ENCODE measurements at regions of chr3 and their contacts with region 1.

Region 1: GRCh38 chr3:71491154-71491752 is 92.3 kb downstream of the FOXP1 start:
- DNase-seq: no peak
- H3K4me3 Mint-ChIP-seq: no peak overlapping the region
- H3K27ac Mint-ChIP-seq: peak overlapping the region; percentile 76
- H3K4me1 Mint-ChIP-seq: peaks cover 84% of the 10 kb centered on the region
- H3K27me3 Mint-ChIP-seq: no peaks in the 10 kb centered on the region

Region 2: GRCh38 chr3:71285086-71285485 is 206.2 kb before region 1 on chr3:
- CTCF ChIA-PET with region 1: no interaction called
- POLR2A ChIA-PET with region 1: no interaction called
- DNase-seq: no peak
- H3K4me3 Mint-ChIP-seq: no peak overlapping the region
- H3K27ac Mint-ChIP-seq: no peak overlapping the region
- H3K4me1 Mint-ChIP-seq: peaks cover 4% of the 10 kb centered on the region
- H3K27me3 Mint-ChIP-seq: no peaks in the 10 kb centered on the region

Region 3: GRCh38 chr3:71389911-71390573 is 101.2 kb before region 1 on chr3:
- CTCF ChIA-PET with region 1: no interaction called
- POLR2A ChIA-PET with region 1: no interaction called
- DNase-seq: peak; percentile 36
- H3K4me3 Mint-ChIP-seq: peak overlapping the region; percentile 58
- H3K27ac Mint-ChIP-seq: peak overlapping the region; percentile 82
- H3K4me1 Mint-ChIP-seq: peaks cover 40% of the 10 kb centered on the region
- H3K27me3 Mint-ChIP-seq: peaks cover 11% of the 10 kb centered on the region

Region 4: DNA sequence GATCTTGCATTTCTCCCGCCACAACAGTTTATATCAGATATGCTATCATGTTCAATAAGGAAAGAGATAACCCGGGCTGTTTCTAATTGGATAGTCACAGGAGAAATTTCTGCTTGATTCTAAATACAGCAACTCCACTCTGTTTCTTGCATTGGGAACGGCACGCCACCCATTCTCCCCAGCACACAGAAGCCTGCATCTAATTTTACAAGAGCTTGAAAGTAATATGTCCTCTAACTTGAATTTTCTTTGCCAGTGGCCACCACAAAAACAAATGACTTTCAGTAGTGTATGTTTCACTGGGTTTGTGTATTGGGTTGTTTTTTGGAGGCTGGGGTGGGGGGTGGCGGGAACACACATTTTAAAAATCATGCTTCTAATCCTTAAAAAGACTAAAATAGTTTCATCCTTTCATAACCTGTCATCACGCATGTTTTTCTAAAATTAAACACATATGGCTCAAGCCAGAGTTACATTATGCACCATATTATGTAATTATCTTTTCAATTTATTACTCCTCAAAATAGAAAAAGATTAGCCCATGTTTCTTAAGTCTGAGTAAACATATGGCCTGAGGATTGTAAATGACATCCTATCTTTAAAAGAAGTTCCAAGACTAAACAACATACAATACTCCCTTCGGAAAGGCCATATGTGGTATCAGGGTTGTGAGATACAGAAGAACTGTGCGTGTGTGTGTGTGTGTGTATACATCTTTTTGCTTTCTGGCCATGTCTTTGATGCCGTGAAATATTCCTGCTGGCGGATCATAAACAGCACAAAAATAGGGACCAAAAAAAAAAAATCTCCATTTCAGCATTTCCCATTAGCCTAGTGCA is 84.1 kb before region 1 on chr3:
- CTCF ChIA-PET with region 1: no interaction called
- POLR2A ChIA-PET with region 1: no interaction called
- DNase-seq: no peak
- H3K4me3 Mint-ChIP-seq: no peak overlapping the region
- H3K27ac Mint-ChIP-seq: no peak overlapping the region
- H3K4me1 Mint-ChIP-seq: peaks cover 7% of the 10 kb centered on the region
- H3K27me3 Mint-ChIP-seq: peaks cover 3% of the 10 kb centered on the region

Region 5: DNA sequence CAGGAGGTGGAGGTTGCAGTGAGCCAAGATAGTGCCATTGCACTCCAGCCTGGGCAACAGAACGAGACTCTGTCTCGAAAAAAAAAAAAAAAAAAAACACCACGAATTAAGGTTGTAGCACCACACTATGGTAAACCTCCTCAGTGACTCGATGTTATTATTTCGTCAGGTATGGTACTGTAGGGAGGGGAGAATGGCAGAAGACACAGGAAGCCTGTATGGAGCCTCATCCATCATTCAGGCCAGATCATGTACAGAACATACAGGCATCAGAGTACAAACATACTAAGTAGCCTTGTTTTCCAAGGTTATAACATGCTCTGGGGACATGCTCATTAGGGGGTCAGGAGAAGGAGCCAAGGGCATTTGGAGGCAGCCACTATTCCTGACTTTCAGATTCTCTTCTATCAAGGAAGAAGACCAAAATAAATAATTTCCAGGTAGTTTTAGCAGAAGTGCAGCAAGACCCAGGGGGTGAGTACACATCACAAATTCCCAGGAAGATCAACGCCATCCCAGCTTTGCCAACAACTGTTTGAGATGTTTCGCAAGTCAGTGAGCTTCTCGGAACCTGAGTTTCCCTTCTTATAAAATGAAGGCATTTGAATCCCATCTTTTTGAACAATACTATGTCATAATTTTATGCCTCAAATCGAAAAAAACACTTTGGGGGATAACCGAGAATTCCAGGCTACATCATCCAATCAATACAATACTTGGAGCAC is 12.4 kb after region 1 on chr3:
- CTCF ChIA-PET with region 1: interaction called, 10 read pairs
- POLR2A ChIA-PET with region 1: interaction called, 4 read pairs
- DNase-seq: no peak
- H3K4me3 Mint-ChIP-seq: no peak overlapping the region
- H3K27ac Mint-ChIP-seq: no peak overlapping the region
- H3K4me1 Mint-ChIP-seq: peaks cover 30% of the 10 kb centered on the region
- H3K27me3 Mint-ChIP-seq: peaks cover 2% of the 10 kb centered on the region

Region 6: GRCh38 chr3:71796290-71796689 is 305.0 kb after region 1 on chr3:
- CTCF ChIA-PET with region 1: no interaction called
- POLR2A ChIA-PET with region 1: no interaction called
- DNase-seq: no peak
- H3K4me3 Mint-ChIP-seq: no peak overlapping the region
- H3K27ac Mint-ChIP-seq: no peak overlapping the region
- H3K4me1 Mint-ChIP-seq: no peaks in the 10 kb centered on the region
- H3K27me3 Mint-ChIP-seq: peaks cover 10% of the 10 kb centered on the region

Measured in activated CD4-positive, alpha-beta T cell treated with anti-CD3 and anti-CD28 coated beads, Interleukin-2, amount 10 ng/mL, durations not matched to agents 7 days and 5 days (primary cell).